ENCODE measurements at regions of chr4 and their contacts with region 1.

Region 1: DNA sequence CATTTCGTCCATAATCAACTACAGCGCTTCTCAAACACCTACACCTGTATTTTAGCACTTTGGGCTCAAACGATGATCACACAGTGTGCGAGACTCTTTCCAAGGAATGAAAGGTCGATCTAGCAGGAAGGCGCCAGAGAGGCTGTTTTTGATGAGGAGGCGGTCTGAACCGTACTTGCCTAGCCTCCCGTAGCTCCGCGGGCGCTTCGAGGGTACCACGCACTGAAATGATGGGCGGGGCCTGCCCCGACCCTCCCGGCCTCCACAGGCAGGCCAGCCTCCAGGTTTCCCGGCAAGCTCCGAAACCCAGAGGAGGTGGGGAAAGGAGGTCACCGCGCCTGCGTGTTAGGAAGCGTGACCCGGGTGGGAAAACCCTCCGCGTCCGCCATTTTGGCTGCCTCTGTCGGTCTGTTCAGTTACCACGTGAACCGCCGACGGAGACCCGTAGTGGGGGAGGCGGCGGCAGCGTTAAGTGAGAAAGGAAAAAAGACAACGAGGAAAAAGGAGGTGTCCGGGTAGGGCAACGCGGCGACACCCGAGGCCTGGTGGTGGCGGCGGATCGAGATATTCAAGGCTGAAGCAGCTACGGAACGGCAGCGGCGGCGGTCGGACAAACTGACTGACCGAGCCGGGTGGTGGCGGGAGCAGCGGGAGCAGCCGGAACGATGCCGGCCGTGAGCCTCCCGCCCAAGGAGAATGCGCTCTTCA is at the start of gene NAA15:
- DNase-seq: peak; percentile 95
- CTCF ChIP-seq: no peak

Region 2: DNA sequence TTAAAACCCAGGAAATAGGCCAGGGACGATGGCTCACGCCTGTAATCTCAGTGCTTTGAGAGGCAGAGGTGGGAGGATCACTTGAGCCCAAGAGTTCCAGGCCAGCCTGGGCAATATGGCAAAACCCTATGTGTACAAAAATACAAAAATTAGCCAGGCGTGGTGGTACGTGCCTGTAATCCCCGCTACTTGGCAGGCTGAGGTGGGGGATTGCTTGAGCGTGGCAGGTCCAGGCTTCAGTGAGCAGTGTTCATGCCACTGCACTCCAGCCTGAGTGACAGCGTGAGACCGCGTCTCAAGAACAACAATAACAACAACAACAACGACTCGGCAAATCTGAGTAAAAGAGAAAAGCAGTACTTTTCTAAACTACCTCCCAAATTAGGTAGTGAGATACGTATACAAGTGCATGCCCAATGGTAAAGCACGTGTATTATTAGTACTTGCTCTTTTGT is 14.0 kb after region 1 on chr4:
- CTCF ChIA-PET with region 1: interaction called, 17 read pairs
- POLR2A ChIA-PET with region 1: interaction called, 3 read pairs
- DNase-seq: peak; percentile 39
- CTCF ChIP-seq: no peak

Measured in GM10248 (cell line).